ENCODE measurements at regions of chr1 and their contacts with region 1.

Region 1: DNA sequence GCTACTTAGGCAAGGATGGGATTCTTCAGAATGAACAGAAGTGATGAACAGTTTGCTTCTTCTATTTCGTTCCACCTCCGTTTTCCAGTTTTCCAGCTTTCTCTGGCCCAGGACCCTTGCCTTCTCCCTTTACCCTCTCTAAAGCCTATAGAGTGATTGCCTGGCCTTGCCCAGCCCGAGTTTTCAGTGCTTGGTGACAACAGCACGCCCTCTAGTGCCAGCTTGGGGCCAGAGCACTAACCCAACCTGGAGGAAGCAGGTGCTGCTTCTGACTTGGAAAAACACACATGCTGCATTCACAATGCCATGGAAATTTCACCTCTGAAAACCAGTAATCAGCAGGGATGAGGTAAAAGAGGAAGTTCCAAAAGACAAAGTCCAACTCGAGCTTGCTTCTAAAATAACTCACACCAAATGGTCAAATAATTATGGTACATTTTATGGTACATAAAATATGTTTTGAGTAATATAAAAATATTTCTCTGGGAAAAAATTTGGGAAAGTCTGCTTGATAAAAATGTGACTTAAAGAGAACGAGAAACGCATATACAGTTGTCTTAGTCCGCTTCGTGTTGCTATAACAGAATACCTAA is 26.1 kb downstream of the UBE2T start:
- DNase-seq: peak; percentile 59 to 72 (median 68)
- H3K4me3 ChIP-seq: no peak overlapping the region
- H3K4me3 Mint-ChIP-seq: no peak overlapping the region
- H3K27ac ChIP-seq: no peak overlapping the region
- H3K27ac Mint-ChIP-seq: peak overlapping the region in 2 of 7 donors; percentile 25 to 26
- H3K4me1 ChIP-seq: no peaks in the 10 kb centered on the region
- H3K4me1 Mint-ChIP-seq: peaks cover 0 to 4% (median 0%) of the 10 kb centered on the region in 4 donors
- H3K27me3 ChIP-seq: no peaks in the 10 kb centered on the region
- H3K27me3 Mint-ChIP-seq: peaks cover 0 to 4% of the 10 kb centered on the region in 2 donors

Region 2: DNA sequence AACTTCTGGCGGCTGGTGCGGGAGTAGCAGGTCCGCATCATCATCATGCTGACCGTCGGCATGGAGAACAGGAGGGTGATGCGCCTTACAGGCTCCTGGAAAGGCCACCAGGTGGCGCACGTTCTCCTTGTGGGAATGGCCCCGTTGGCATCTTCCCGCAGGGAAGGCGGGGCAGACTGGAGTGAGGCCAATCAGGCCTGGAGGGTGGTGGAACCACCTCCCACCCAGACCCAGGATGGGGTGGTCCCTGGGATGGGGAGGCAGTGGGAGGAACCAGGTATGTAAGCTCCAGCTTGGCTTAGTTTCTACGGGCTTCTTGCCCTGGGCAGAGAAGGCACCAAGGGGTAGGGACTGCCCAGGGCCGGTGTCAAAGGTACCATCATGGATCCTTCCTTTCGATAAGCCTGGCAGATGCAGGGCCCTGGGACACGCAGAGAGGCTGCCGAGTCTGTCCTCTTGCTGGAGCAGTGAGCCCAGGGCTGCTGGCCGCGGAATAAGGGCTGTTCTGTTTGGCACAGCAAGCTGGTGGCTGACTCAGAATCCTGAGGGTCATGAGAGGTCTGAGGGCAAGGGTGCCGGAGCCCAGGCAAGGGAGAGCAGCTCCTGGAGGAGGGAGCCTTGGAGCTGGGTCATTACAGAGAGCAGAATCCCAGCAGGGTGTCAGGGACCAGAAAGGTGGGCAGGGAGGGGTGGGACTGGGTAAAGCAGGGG is 130.8 kb before region 1 on chr1:
- CTCF ChIA-PET with region 1: interaction called, 18 read pairs
- POLR2A ChIA-PET with region 1: no interaction called
- intact Hi-C with region 1: loop called (anchors 2 kb)
- DNase-seq: peak; percentile 43 to 56 (median 50)
- H3K4me3 ChIP-seq: no peak overlapping the region
- H3K4me3 Mint-ChIP-seq: no peak overlapping the region
- H3K27ac ChIP-seq: no peak overlapping the region
- H3K27ac Mint-ChIP-seq: peak overlapping the region in 1 of 7 donors; percentile 29
- H3K4me1 ChIP-seq: peaks cover 5% of the 10 kb centered on the region
- H3K4me1 Mint-ChIP-seq: peaks cover 9 to 16% (median 13%) of the 10 kb centered on the region in 4 donors
- H3K27me3 ChIP-seq: no peaks in the 10 kb centered on the region
- H3K27me3 Mint-ChIP-seq: peaks cover 4 to 6% of the 10 kb centered on the region in 2 donors